Caco-2 (cell line): ENCODE measurements at regions of chr3 and their contacts with region 1.

Region 1: GRCh38 chr3:169295126-169295525 is 368.4 kb downstream of the MECOM start:
- DNase-seq: peak in 1 of 2 experiments; percentile 23
- H3K4me3 ChIP-seq: no peak overlapping the region
- H3K4me3 Mint-ChIP-seq: no peak overlapping the region
- H3K27ac Mint-ChIP-seq: no peak overlapping the region
- H3K4me1 ChIP-seq: no peaks in the 10 kb centered on the region
- H3K4me1 Mint-ChIP-seq: peaks cover 23% of the 10 kb centered on the region
- H3K27me3 ChIP-seq: no peaks in the 10 kb centered on the region
- H3K27me3 Mint-ChIP-seq: no peaks in the 10 kb centered on the region
- CTCF ChIP-seq: peak; percentile 19 to 43

Region 2: GRCh38 chr3:169334991-169335390 is 39.9 kb after region 1 on chr3:
- CTCF ChIA-PET with region 1: no interaction called
- POLR2A ChIA-PET with region 1: no interaction called
- intact Hi-C with region 1: no loop called
- DNase-seq: no peak
- H3K4me3 ChIP-seq: no peak overlapping the region
- H3K4me3 Mint-ChIP-seq: no peak overlapping the region
- H3K27ac Mint-ChIP-seq: no peak overlapping the region
- H3K4me1 ChIP-seq: 0 out of 2 replicates have a peak, but pooled peaks cover 4% of the 10 kb centered on the region
- H3K4me1 Mint-ChIP-seq: no peaks in the 10 kb centered on the region
- H3K27me3 ChIP-seq: no peaks in the 10 kb centered on the region
- H3K27me3 Mint-ChIP-seq: no peaks in the 10 kb centered on the region
- CTCF ChIP-seq: no peak

Region 3: DNA sequence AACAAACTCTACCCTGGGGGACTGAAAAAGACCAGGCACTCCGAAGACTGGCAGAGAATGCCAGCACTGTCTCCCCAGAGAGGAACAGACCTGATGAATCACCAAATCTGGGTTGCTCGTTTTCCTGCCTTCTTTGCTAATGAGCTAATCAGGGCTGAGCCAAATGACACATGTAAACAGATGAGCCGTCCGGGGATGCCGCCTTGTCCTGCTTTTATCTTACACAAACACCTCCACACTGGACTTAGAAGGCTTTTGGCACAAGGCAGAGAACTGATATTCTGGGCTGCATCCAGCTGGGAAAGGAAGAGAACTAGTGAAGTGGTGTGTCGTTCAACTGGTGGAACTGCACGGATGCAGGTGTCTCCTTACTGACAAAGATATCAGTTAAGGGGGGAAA is 280.2 kb after region 1 on chr3:
- CTCF ChIA-PET with region 1: no interaction called
- POLR2A ChIA-PET with region 1: no interaction called
- intact Hi-C with region 1: loop called (anchors 5 kb)
- DNase-seq: no peak
- H3K4me3 ChIP-seq: no peak overlapping the region
- H3K4me3 Mint-ChIP-seq: no peak overlapping the region
- H3K27ac Mint-ChIP-seq: no peak overlapping the region
- H3K4me1 ChIP-seq: no peaks in the 10 kb centered on the region
- H3K4me1 Mint-ChIP-seq: no peaks in the 10 kb centered on the region
- H3K27me3 ChIP-seq: no peaks in the 10 kb centered on the region
- H3K27me3 Mint-ChIP-seq: no peaks in the 10 kb centered on the region
- CTCF ChIP-seq: no peak